ENCODE measurements at regions of chr1 and their contacts with region 1.

Region 1: DNA sequence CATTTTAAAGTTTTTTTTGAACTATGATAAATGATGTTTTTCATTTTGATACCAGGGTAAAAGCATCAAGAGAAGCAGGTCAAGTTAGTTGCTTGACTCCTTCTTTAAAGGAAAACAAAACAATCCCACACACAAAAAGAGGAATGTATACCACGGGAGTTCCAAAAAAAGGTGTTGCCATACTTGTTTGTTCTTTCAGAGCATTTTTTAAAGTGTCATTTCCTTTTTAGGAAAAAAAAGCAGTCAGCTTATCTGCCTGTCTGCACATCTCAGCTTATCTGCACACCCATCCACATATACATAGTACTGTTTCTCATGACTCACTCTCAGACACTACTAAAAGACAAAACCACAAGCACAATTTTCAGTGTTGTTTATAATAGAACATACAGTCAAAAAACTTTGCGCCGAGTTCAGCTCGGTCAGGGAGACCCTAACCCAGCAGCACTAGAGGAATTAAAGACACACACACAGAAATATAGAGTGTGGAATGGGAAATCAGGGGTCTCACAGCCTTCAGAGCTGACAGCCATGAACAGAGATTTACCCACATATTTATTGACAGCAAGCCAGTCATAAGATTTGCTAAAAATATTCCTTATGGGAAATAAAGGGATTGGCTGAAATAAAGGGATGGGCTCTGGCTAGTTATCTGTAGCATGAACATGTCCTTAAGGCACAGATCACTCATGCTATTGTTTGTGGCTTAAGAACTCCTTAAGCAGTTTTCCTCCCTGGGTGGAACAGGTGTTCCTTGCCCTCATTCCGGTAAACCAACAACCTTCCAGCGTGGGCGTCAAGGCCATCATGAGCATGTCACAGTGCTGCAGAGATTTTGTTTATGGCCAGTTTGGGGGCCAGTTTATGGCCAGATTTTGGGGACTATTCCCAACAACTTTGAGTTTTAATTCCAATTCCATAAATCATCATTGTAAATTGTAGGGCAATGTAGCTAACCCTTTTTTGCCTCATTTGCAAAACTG is 11.4 kb upstream of the MNDA start:
- DNase-seq: peak; percentile 26
- H3K4me3 Mint-ChIP-seq: peak overlapping the region; percentile 41
- H3K27ac Mint-ChIP-seq: peak overlapping the region; percentile 84
- H3K4me1 Mint-ChIP-seq: peaks cover 37% of the 10 kb centered on the region
- H3K27me3 Mint-ChIP-seq: peaks cover 3% of the 10 kb centered on the region

Region 2: DNA sequence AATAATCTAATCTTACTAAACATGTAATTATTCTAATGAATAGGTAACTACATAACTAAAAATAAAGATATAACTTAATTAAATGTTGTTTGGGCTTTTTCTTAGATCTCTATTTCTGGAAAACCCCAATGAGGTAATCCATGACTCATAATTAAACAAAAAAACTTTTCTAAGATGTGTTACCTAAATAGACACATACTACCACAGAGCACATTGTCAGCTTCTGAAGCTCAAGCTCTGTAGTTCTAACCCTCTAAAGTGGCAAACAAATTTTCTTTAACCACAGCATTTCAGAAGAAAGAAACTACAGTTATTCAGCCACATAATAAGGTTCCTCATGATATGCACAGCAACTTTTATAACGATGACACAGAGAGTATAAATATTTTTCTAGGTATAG is 103.4 kb before region 1 on chr1:
- intact Hi-C with region 1: loop called (anchors 5 kb)
- DNase-seq: no peak
- H3K4me3 Mint-ChIP-seq: no peak overlapping the region
- H3K27ac Mint-ChIP-seq: peak overlapping the region; percentile 9
- H3K4me1 Mint-ChIP-seq: peaks cover 15% of the 10 kb centered on the region
- H3K27me3 Mint-ChIP-seq: peaks cover 10% of the 10 kb centered on the region

Region 3: GRCh38 chr1:158754420-158754819 is 65.3 kb before region 1 on chr1 and contains the start of gene OR6K6:
- intact Hi-C with region 1: no loop called
- DNase-seq: no peak
- H3K4me3 Mint-ChIP-seq: no peak within 1 kb of the TSS
- H3K27ac Mint-ChIP-seq: no peak within 1 kb of the TSS
- H3K4me1 Mint-ChIP-seq: no peaks in the 10 kb centered on the region
- H3K27me3 Mint-ChIP-seq: peaks cover 9% of the 10 kb centered on the region
- total RNA-seq, gene OR6K6: not detected in 2 replicates

Region 4: GRCh38 chr1:158830904-158831507 is 11.3 kb after region 1 on chr1 and contains the start of gene MNDA:
- intact Hi-C with region 1: loop called (anchors 1 kb)
- DNase-seq: no peak
- H3K4me3 Mint-ChIP-seq: no peak within 1 kb of the TSS
- H3K27ac Mint-ChIP-seq: peak within 1 kb of the TSS; percentile 64
- H3K4me1 Mint-ChIP-seq: peaks cover 20% of the 10 kb centered on the region
- H3K27me3 Mint-ChIP-seq: no peaks in the 10 kb centered on the region
- total RNA-seq, gene MNDA: not detected in 2 replicates

Region 5: GRCh38 chr1:158972841-158973240 is 153.1 kb after region 1 on chr1:
- intact Hi-C with region 1: loop called (anchors 1 kb)
- DNase-seq: no peak
- H3K4me3 Mint-ChIP-seq: no peak overlapping the region
- H3K27ac Mint-ChIP-seq: no peak overlapping the region
- H3K4me1 Mint-ChIP-seq: peaks cover 33% of the 10 kb centered on the region
- H3K27me3 Mint-ChIP-seq: no peaks in the 10 kb centered on the region

Region 6: GRCh38 chr1:159077120-159077961 is 257.6 kb after region 1 on chr1:
- intact Hi-C with region 1: loop called (anchors 1 kb)
- DNase-seq: peak; percentile 95
- H3K4me3 Mint-ChIP-seq: peak overlapping the region; percentile 89
- H3K27ac Mint-ChIP-seq: peak overlapping the region; percentile 98
- H3K4me1 Mint-ChIP-seq: peaks cover 37% of the 10 kb centered on the region
- H3K27me3 Mint-ChIP-seq: no peaks in the 10 kb centered on the region

Measured in activated T-helper 2 cell treated with anti-CD3 and anti-CD28 coated beads, Interferon-gamma antibody, Interleukin-2, Interleukin-4, amounts not matched to agents 10 μg/mL and 5 μg/mL and 100 μg/mL, durations not matched to agents 14 hours and 24 hours and 36 hours (primary cell).